Activated T-helper 2 cell treated with anti-CD3 and anti-CD28 coated beads, Interferon-gamma antibody, Interleukin-2, Interleukin-4, amounts not matched to agents 10 μg/mL and 5 μg/mL and 100 μg/mL, durations not matched to agents 14 hours and 24 hours and 36 hours (primary cell): ENCODE measurements at regions of chr3 and their contacts with region 1.

Region 1: DNA sequence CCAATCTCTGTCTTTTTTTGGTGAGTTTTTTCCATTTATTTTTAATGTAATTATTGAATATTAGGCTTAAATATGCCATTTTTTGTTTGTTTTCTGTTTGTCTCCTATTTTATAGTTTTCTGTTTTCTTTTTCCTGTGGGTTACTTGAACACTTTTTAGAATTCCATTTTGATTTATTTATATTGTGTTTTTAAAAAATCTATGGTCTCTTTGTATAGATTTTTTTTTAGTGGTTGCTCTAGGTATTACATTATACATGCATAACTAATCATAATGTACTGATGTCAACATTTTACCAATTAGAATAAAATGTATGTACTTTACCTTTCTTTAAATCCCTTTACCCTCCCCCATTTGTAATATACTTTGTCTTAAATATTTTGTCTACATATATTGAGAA is 56.2 kb downstream of the RASA2 start:
- DNase-seq: no peak
- H3K4me3 Mint-ChIP-seq: peak overlapping the region; percentile 10
- H3K27ac Mint-ChIP-seq: peak overlapping the region; percentile 77
- H3K4me1 Mint-ChIP-seq: peaks cover 46% of the 10 kb centered on the region
- H3K27me3 Mint-ChIP-seq: no peaks in the 10 kb centered on the region

Region 2: DNA sequence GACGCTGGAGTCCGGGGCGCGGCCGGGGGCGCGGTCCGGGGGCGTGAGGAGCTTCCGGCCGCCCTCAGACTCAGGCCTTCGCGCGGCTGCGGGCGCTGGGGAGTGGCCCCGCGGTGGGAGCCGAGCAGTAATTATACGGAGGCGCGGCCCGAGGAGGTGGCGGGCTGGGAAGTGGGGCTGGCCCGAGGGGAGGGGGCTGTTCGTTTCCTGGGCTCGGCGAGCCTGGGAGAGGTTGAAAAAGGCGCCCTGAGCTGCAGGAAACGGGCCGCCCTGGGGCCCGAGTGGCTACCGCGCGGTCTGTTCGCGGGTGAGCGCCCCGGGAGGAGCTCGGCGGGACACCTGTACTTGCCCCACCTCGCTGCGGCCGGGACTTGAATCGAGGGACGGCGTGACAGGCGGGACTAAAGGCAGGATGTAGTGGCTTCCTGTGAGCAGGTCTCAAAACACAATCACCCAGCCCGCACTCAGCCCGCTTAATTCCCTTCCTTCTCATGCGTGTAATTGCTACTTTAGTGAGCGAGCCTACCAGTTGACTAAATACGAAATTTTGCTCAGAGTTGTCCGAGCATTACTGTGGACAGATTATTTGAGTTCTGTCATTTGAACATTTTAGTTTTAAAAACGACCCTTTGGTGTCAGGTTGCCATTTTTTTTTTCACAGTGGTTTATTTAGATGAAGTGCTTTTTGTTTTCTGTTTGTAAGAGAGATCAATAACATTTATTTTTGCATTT is 55.3 kb before region 1 on chr3:
- intact Hi-C with region 1: loop called (anchors 1 kb)
- DNase-seq: peak; percentile 86
- H3K4me3 Mint-ChIP-seq: peak overlapping the region; percentile 91
- H3K27ac Mint-ChIP-seq: peak overlapping the region; percentile 95
- H3K4me1 Mint-ChIP-seq: peaks cover 56% of the 10 kb centered on the region
- H3K27me3 Mint-ChIP-seq: no peaks in the 10 kb centered on the region

Region 3: DNA sequence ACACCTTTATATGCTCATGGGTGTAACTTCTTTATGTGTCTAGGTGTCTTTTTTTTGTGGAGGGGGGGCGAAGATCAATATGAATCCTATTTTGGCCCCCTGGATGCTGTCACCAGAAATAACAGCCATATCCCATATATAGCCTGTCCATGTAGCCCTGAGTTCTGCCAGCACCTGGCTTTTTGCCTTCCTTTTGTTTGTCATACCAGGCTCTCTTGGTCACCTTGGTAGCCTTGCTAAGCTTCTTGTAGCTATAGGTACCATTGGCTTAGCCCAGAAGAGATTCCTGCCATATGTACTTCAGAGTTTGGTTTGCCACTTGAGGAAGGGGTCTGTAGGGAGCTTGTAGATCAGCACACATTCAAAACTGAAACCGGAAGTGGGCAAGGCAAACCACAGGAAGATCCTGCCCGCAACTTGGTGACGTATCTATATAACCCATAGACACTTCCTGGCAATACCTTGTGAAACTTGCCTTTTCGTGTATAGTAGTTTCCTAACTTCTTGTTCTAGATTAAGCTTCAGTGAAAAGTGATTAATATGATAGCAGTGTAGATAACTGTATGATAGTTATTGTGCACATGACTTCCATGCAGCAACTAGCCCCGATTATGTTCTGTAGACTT is 44.3 kb before region 1 on chr3:
- intact Hi-C with region 1: loop called (anchors 1 kb)
- DNase-seq: peak; percentile 90
- H3K4me3 Mint-ChIP-seq: peak overlapping the region; percentile 43
- H3K27ac Mint-ChIP-seq: peak overlapping the region; percentile 82
- H3K4me1 Mint-ChIP-seq: peaks cover 66% of the 10 kb centered on the region
- H3K27me3 Mint-ChIP-seq: no peaks in the 10 kb centered on the region

Region 4: GRCh38 chr3:141519587-141519986 is 23.4 kb before region 1 on chr3:
- intact Hi-C with region 1: loop called (anchors 2 kb)
- DNase-seq: no peak
- H3K4me3 Mint-ChIP-seq: no peak overlapping the region
- H3K27ac Mint-ChIP-seq: no peak overlapping the region
- H3K4me1 Mint-ChIP-seq: peaks cover 27% of the 10 kb centered on the region
- H3K27me3 Mint-ChIP-seq: no peaks in the 10 kb centered on the region

Region 5: GRCh38 chr3:141530133-141530768 is 12.7 kb before region 1 on chr3:
- intact Hi-C with region 1: loop called (anchors 1 kb)
- DNase-seq: no peak
- H3K4me3 Mint-ChIP-seq: no peak overlapping the region
- H3K27ac Mint-ChIP-seq: peak overlapping the region; percentile 44
- H3K4me1 Mint-ChIP-seq: peaks cover 34% of the 10 kb centered on the region
- H3K27me3 Mint-ChIP-seq: no peaks in the 10 kb centered on the region

Region 6: DNA sequence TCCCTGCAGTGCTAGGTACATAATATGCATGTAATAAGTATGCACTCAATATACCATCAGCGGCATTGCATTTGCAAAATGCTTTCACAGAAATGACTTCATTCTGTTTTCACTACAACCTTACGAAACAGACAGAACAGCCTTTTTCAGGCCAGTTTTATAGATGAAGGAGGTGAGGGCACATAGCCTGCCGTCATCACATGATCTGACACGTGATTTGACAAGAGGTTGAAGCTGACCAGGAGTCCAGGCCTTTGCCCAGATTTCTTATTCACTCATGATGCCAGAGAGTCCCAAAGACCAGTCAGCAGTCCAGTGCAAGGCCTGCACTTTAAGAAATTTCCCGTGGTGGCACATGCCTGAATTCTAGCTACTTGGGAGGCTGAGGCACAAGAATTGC is 176.9 kb after region 1 on chr3:
- intact Hi-C with region 1: no loop called
- DNase-seq: no peak
- H3K4me3 Mint-ChIP-seq: no peak overlapping the region
- H3K27ac Mint-ChIP-seq: no peak overlapping the region
- H3K4me1 Mint-ChIP-seq: no peaks in the 10 kb centered on the region
- H3K27me3 Mint-ChIP-seq: peaks cover 23% of the 10 kb centered on the region